ENCODE measurements at regions of chr3 and their contacts with region 1.

Region 1: GRCh38 chr3:51670823-51671733 is at the start of gene TEX264:
- DNase-seq: peak; percentile 94
- ATAC-seq: peak; percentile 66
- H3K4me3 Mint-ChIP-seq: peak within 1 kb of the TSS; percentile 79
- H3K27ac Mint-ChIP-seq: peak within 1 kb of the TSS; percentile 74
- H3K4me1 Mint-ChIP-seq: peaks cover 56% of the 10 kb centered on the region
- H3K27me3 Mint-ChIP-seq: no peaks in the 10 kb centered on the region
- total RNA-seq, gene TEX264: 35.3 to 37.4 TPM

Region 2: DNA sequence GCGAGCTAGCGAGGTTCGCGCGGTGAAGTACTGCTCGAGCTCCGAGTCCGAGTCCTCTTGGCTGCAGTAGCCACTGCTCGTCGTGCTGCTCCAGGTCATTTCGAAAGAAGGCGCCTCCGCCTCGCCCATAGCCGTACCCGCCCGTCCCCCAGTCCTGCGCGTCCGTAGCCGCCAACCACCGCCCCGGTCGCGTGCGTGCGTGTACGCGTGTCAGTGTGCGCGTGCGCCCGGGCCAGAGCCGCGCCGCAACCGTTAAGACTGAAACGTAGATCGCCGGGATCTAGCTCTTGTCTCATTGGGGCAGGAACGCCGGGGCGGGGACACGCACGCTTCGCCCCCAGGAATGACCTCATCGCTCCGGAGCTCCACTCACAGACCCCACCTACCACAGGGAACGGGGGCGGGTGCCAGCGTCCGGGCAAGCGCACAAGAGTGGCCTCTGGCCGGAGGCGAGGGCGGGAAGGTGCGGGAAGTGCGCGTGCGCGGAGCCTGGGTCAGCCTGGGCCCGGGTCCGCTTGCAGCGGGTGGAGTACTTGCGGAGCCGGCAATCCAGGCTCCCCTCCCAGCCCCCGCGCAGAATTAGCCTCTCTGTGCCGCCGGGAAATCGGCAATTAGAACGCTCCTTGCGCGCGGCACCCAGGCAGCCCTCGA is 1333.8 kb before region 1 on chr3:
- CTCF ChIA-PET with region 1: no interaction called
- POLR2A ChIA-PET with region 1: no interaction called
- intact Hi-C with region 1: loop called in 1 of 2 experiments (anchors 10 kb)
- DNase-seq: peak; percentile 99
- ATAC-seq: peak; percentile 82
- H3K4me3 Mint-ChIP-seq: peak overlapping the region; percentile 83
- H3K27ac Mint-ChIP-seq: peak overlapping the region; percentile 91
- H3K4me1 Mint-ChIP-seq: peaks cover 50% of the 10 kb centered on the region
- H3K27me3 Mint-ChIP-seq: no peaks in the 10 kb centered on the region

Region 3: GRCh38 chr3:51391075-51391567 is 280.0 kb before region 1 on chr3 and contains the start of gene RBM15B:
- CTCF ChIA-PET with region 1: interaction called, 8 read pairs
- POLR2A ChIA-PET with region 1: no interaction called
- intact Hi-C with region 1: loop called in 1 of 2 experiments (anchors 1 kb)
- DNase-seq: peak; percentile 99
- ATAC-seq: peak; percentile 96
- H3K4me3 Mint-ChIP-seq: peak within 1 kb of the TSS; percentile 81
- H3K27ac Mint-ChIP-seq: peak within 1 kb of the TSS; percentile 89
- H3K4me1 Mint-ChIP-seq: peaks cover 70% of the 10 kb centered on the region
- H3K27me3 Mint-ChIP-seq: no peaks in the 10 kb centered on the region
- total RNA-seq, gene RBM15B: 20.9 to 21.5 TPM

Region 4: DNA sequence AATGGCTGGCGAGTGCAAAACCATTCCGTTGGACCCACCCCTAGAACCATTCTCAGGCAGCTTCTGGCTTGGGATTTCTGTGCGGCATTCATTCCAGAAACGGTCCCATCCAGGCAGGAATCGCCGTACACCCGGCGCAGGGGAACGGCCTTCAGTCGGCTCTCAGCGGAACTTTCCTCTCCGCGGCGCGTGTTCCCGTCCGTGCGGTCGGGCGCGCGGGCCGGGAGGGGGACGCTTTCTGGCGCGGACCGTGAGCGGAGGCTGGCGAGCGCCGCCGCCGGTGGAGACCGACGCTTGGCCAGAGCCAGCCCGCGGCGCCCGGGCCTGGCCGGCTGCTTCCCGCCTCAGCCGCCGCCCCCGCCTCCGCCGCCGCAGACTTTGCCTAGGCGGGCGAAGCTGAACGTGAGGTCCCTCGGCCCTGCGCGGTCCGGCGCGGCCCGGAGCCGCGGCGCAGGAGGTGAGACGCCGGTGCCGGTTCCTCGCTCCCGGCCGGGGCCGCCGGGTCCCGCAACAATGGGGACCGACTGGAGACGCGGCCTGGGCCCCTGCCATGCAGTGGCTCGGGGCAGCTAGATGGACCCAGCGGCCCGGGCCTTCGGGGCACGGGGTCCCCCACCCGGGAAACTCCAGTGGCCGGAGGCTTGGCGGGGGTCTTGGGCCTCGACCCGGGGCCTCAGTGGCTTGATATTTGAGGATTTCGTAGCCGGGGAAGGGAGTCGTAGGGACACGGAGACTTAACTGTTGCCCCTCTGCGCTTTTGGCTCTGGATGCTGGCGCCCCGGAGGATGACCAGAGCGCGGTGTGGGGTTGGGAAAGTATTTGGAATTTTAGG is 132.4 kb before region 1 on chr3 and contains the start of gene RAD54L2:
- CTCF ChIA-PET with region 1: interaction called, 13 read pairs
- POLR2A ChIA-PET with region 1: no interaction called
- intact Hi-C with region 1: loop called in 1 of 2 experiments (anchors 1 kb)
- DNase-seq: peak; percentile 87
- ATAC-seq: peak; percentile 85
- H3K4me3 Mint-ChIP-seq: peak within 1 kb of the TSS; percentile 78
- H3K27ac Mint-ChIP-seq: peak within 1 kb of the TSS; percentile 94
- H3K4me1 Mint-ChIP-seq: peaks cover 32% of the 10 kb centered on the region
- H3K27me3 Mint-ChIP-seq: no peaks in the 10 kb centered on the region
- total RNA-seq, gene RAD54L2: 24.9 to 27.4 TPM

Region 5: DNA sequence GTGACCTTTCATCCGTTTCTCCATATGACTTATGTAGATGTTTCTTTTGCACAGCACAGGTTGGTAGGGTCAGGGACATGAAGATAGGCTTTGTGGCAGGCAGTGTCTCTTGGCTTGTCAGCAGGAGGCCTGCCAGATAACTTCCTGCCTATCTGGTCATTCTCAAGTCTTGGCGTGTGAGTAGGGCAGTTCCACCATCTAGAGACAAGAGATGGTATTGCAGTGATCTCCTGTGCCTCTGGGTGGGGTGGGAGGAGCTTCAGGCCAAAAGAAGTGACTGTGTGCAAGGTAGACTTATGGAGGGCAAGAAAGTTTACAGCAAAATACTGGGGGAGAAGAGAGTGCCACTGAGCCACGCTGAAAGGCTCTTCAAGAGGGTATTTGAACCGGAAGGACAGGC is 11.0 kb after region 1 on chr3:
- CTCF ChIA-PET with region 1: interaction called, 57 read pairs
- POLR2A ChIA-PET with region 1: interaction called, 5 read pairs
- intact Hi-C with region 1: loop called (anchors 1 kb)
- DNase-seq: peak; percentile 83
- ATAC-seq: peak; percentile 86
- H3K4me3 Mint-ChIP-seq: no peak overlapping the region
- H3K27ac Mint-ChIP-seq: peak overlapping the region; percentile 80
- H3K4me1 Mint-ChIP-seq: peaks cover 92% of the 10 kb centered on the region
- H3K27me3 Mint-ChIP-seq: no peaks in the 10 kb centered on the region

Region 6: DNA sequence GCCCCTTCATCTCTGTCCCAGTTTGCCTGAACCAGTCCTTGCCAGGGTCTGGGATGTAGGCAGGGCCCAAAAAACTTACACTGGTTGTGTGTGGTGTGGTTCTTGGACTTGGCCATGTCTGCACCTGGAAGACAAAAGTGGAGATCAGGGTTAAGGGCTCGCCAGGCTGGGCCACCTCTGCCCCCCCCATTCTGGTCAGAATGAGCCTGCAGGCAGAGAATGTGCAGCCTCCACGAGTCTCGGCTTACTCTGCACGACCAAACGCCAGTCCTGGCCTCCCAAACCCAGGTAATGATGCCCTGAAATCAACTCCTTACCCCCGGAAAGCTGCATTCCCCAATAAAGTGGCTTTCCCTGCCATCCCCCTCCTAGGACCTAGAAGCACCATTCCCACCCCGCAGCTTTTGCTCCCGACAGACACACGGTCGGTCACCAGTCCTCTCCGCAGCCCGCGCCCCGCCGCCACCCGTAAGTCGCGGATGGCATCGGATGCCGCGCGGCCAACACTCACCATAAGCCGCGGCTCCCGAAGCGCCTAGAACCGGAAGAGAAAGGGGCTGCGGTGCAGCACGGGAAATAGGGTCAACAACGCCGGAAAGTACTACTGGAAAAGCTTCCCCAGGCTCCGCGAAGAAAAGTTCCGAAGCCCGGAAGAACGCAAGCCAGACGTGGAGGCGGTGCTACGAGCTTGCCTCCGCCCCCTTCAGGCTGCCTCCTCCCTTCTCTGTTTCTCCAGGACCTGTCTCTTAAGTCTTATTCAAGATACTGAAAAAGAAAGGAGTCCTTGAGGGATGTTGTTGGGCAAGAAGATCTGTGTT is 324.5 kb after region 1 on chr3 and contains the start of gene RPL29:
- CTCF ChIA-PET with region 1: no interaction called
- POLR2A ChIA-PET with region 1: no interaction called
- intact Hi-C with region 1: no loop called
- DNase-seq: peak; percentile 96
- ATAC-seq: peak; percentile 95
- H3K4me3 Mint-ChIP-seq: peak within 1 kb of the TSS; percentile 100
- H3K27ac Mint-ChIP-seq: peak within 1 kb of the TSS; percentile 100
- H3K4me1 Mint-ChIP-seq: peaks cover 26% of the 10 kb centered on the region
- H3K27me3 Mint-ChIP-seq: no peaks in the 10 kb centered on the region
- total RNA-seq, gene RPL29: 1,975 to 2,071 TPM

Region 7: GRCh38 chr3:52238761-52239701 is 568.0 kb after region 1 on chr3 and contains the start of gene TWF2:
- CTCF ChIA-PET with region 1: no interaction called
- POLR2A ChIA-PET with region 1: no interaction called
- intact Hi-C with region 1: loop called in 1 of 2 experiments (anchors 1 kb)
- DNase-seq: peak; percentile 92
- ATAC-seq: peak; percentile 67
- H3K4me3 Mint-ChIP-seq: peak within 1 kb of the TSS; percentile 99
- H3K27ac Mint-ChIP-seq: peak within 1 kb of the TSS; percentile 99
- H3K4me1 Mint-ChIP-seq: peaks cover 70% of the 10 kb centered on the region
- H3K27me3 Mint-ChIP-seq: no peaks in the 10 kb centered on the region
- total RNA-seq, gene TWF2: 85.0 to 93.5 TPM